OCI-LY7 (cell line): ENCODE measurements at regions of chr11 and their contacts with region 1.

Region 1: GRCh38 chr11:12787847-12788246 is 113.6 kb downstream of the TEAD1 start:
- DNase-seq: no peak
- H3K4me3 ChIP-seq: no peak overlapping the region
- H3K27ac ChIP-seq: no peak overlapping the region
- H3K4me1 ChIP-seq: no peaks in the 10 kb centered on the region
- CTCF ChIP-seq: no peak

Region 2: GRCh38 chr11:12691473-12691872 is 96.4 kb before region 1 on chr11:
- CTCF ChIA-PET with region 1: no interaction called
- POLR2A ChIA-PET with region 1: interaction called, 10 read pairs
- intact Hi-C with region 1: no loop called
- DNase-seq: no peak
- H3K4me3 ChIP-seq: no peak overlapping the region
- H3K27ac ChIP-seq: no peak overlapping the region
- H3K4me1 ChIP-seq: peaks cover 45% of the 10 kb centered on the region
- CTCF ChIP-seq: no peak

Region 3: DNA sequence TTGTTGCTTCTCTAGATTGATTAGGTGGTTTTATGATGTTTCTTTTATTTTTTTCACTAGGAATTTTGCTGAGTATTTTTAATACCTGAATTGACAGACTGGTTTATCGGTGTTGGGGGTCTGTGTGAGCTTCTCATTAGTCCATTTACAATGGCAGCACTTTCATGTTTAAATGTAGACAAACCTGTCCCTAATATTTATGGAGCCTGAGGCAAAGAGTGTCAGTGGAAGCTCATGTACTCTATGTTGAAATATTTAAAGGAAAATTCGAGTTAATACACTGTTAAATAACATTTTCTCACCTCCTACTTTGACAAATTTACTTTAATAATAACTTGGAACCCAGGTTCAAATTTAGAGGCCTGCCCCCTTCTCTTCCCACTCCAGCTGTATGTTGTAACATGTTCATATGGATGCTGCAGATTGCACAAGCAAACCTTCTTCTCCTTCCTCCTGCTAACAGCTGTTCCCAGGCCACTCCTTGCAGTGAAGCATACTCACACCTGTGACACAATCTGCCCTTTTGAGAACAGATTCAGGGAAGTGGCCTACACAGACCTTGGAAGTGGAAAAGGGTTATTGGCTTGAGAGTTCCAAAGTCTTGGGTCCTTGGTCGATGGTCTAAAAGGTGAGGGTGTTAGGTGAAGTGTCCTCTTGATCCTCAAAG is 18.1 kb after region 1 on chr11:
- CTCF ChIA-PET with region 1: no interaction called
- POLR2A ChIA-PET with region 1: no interaction called
- intact Hi-C with region 1: no loop called
- DNase-seq: no peak
- H3K4me3 ChIP-seq: no peak overlapping the region
- H3K27ac ChIP-seq: no peak overlapping the region
- H3K4me1 ChIP-seq: no peaks in the 10 kb centered on the region
- CTCF ChIP-seq: no peak